ENCODE measurements at regions of chr7 and their contacts with region 1.

Region 1: GRCh38 chr7:129436335-129436923 is 2.2 kb downstream of the STRIP2 start:
- DNase-seq: no peak
- ATAC-seq: no peak
- H3K4me3 ChIP-seq: no peak overlapping the region
- H3K4me3 Mint-ChIP-seq: no peak overlapping the region
- H3K27ac ChIP-seq: no peak overlapping the region
- H3K27ac Mint-ChIP-seq: no peak overlapping the region
- H3K4me1 ChIP-seq: peaks cover 5 to 15% of the 10 kb centered on the region in 2 experiments
- H3K4me1 Mint-ChIP-seq: peaks cover 17 to 19% (median 17%) of the 10 kb centered on the region in 3 donors
- H3K27me3 ChIP-seq: peaks cover 12 to 25% of the 10 kb centered on the region in 2 experiments
- H3K27me3 Mint-ChIP-seq: peaks cover 22 to 26% of the 10 kb centered on the region in 2 donors

Region 2: GRCh38 chr7:129456421-129456820 is 20.0 kb after region 1 on chr7:
- CTCF ChIA-PET with region 1: no interaction called
- POLR2A ChIA-PET with region 1: interaction called in 1 of 2 experiments, 10 read pairs
- DNase-seq: no peak
- ATAC-seq: no peak
- H3K4me3 ChIP-seq: no peak overlapping the region
- H3K4me3 Mint-ChIP-seq: no peak overlapping the region
- H3K27ac ChIP-seq: no peak overlapping the region
- H3K27ac Mint-ChIP-seq: no peak overlapping the region
- H3K4me1 ChIP-seq: no peaks in the 10 kb centered on the region
- H3K4me1 Mint-ChIP-seq: no peaks in the 10 kb centered on the region
- H3K27me3 ChIP-seq: no peaks in the 10 kb centered on the region
- H3K27me3 Mint-ChIP-seq: no peaks in the 10 kb centered on the region

Region 3: DNA sequence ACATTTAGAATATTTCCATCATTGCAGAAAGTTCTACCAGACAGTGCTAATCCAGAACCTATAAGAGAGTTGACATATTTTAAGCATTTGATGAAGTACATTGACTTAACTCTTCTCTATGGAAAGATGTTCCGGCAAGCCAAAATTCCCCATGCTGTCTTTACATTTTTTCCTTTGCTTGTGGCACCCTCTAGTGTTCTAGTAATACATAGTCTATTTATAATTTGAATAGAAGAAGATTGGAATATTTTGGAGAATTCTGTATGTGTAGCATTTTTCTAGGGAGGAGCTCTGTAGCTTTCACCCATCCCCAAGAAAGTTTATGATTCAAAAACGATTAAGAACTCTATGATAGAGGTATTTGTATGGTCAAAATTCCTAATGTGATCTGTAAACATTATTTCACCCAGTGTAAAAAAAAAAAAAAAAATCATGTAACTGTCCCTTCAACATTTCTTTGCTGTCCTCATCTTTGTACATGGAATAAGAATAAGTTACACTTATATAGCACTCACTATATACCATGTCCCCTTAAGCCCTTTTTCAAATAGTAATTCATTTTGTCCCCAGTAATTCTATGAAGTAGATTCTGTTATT is 208.3 kb after region 1 on chr7:
- CTCF ChIA-PET with region 1: no interaction called
- POLR2A ChIA-PET with region 1: no interaction called
- DNase-seq: peak in 1 of 35 experiments; percentile 43
- ATAC-seq: no peak
- H3K4me3 ChIP-seq: no peak overlapping the region
- H3K4me3 Mint-ChIP-seq: no peak overlapping the region
- H3K27ac ChIP-seq: no peak overlapping the region
- H3K27ac Mint-ChIP-seq: no peak overlapping the region
- H3K4me1 ChIP-seq: no peaks in the 10 kb centered on the region
- H3K4me1 Mint-ChIP-seq: peaks cover 20 to 37% (median 35%) of the 10 kb centered on the region in 3 donors
- H3K27me3 ChIP-seq: no peaks in the 10 kb centered on the region
- H3K27me3 Mint-ChIP-seq: no peaks in the 10 kb centered on the region

Measured in T-cell (primary cell).